ENCODE measurements at regions of chr1 and their contacts with region 1.

Region 1: GRCh38 chr1:43934101-43934985 is 742 bp downstream of the ARTN start:
- DNase-seq: peak; percentile 79
- ATAC-seq: peak; percentile 49

Region 2: GRCh38 chr1:43529206-43529731 is 405.1 kb before region 1 on chr1:
- intact Hi-C with region 1: loop called (anchors 2 kb)
- DNase-seq: peak; percentile 92
- ATAC-seq: peak; percentile 68

Region 3: GRCh38 chr1:43763497-43763973 is 170.8 kb before region 1 on chr1:
- intact Hi-C with region 1: loop called (anchors 1 kb)
- DNase-seq: no peak
- ATAC-seq: peak; percentile 94

Region 4: GRCh38 chr1:43836267-43836951 is 97.9 kb before region 1 on chr1:
- intact Hi-C with region 1: loop called (anchors 10 kb)
- DNase-seq: no peak
- ATAC-seq: peak; percentile 54

Region 5: DNA sequence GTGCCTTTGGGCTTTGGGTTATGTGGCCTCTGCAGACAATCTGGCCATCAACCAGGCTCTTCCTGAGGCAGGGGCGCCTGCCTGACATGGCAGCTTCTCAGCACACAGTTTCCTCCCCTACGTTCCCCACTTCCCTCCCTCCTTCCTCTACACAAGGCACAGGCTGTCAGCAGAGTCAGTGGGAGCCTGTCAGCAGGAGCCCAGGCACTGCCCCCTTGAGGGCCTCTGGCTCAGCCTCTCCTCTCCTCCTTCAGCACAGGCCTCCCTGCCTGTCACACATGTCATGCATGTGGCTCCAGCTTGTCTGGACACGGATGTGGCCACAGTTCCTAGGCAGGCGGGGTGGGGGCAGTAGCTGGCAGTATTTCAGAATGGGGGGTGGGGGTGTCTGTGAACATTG is 52.9 kb before region 1 on chr1:
- intact Hi-C with region 1: loop called (anchors 5 kb)
- DNase-seq: no peak
- ATAC-seq: no peak

Region 6: DNA sequence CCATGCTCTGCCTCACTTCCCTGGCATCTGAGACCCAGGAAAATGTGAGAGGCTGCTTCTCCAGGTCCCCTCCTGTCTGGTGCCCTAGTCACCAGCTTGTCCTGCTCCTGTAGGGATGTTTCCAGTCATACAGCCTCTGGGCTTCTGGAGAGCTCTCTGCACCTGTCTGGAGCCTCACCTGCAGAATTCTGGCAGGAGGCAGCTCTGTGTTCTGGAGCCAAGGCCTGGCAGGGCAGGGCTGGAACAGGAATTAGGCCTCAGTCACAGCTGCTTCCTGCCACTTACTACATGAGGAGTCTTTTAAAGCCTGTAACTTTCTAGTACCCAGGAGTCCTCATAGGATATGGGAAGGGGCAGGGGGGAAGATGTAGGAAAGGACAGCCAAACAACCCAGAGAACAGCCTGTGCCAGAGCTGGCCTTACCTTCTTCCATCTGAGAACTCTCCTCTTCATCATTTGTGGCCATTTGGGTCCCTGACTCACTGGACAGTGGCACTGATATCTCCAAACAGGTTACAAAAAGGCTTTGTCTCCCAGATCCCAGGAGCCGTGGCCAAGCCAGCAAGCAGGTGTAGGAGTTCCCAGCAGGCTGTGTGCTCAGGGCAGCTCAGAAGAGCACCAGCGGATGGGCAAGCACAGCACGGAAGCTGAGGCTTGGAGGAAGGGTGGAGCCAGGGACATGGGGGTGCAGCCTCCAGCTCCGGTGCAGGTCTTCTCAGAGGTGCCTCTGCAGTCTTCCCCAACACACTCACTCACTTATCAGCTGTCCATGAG is 32.1 kb before region 1 on chr1:
- intact Hi-C with region 1: no loop called
- DNase-seq: no peak
- ATAC-seq: no peak

Region 7: GRCh38 chr1:44208226-44208625 is 273.9 kb after region 1 on chr1:
- intact Hi-C with region 1: no loop called
- DNase-seq: no peak
- ATAC-seq: no peak

Measured in Right ventricle myocardium inferior (tissue), 1 donor.